BJ (cell line): ENCODE measurements at regions of chr12 and their contacts with region 1.

Region 1: DNA sequence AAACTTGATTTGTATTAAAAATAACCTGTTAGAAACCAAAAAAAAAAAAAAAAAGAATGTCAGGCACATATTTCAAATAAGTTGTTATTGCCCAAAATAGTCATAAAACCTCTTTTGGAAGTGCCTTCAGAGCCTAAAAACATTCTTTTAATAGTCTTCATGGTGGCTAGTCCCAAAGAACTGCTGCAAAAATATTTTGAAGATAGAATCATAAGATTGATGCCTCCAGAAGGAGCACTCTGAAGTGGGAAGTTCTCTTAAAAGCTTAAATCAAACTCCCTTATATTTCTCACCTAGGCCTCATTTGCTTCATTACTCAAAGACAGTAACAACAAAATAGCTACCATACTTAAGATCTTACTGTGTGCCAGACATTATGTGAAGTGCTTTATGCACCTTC is 27.2 kb upstream of the NT5DC3 start:
- DNase-seq: no peak
- H3K4me3 ChIP-seq: no peak overlapping the region
- H3K27me3 ChIP-seq: no peaks in the 10 kb centered on the region
- CTCF ChIP-seq: no peak

Region 2: DNA sequence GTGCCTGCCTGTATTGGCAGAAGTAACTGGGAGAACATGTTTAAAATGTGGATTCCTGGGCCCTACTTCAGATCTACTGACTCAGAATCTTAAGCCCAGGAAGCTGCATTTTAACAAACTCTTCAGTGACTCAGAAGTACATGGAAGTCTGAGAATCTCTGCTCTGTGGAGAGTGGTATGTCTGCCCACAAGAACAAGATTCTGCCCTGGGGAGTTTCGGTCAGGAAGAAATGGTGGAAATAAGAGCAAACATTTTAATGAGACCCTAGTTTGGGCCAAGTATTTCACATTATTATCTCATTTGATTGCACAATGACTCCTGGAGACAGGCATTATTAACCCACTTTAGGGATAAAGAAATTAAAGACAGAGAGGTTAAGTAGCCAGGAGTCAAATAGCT is 1207.9 kb after region 1 on chr12:
- CTCF ChIA-PET with region 1: no interaction called
- POLR2A ChIA-PET with region 1: interaction called, 16 read pairs
- DNase-seq: peak; percentile 64
- H3K4me3 ChIP-seq: no peak overlapping the region
- H3K27me3 ChIP-seq: no peaks in the 10 kb centered on the region
- CTCF ChIP-seq: no peak